ENCODE measurements at regions of chr12 and their contacts with region 1.

Region 1: DNA sequence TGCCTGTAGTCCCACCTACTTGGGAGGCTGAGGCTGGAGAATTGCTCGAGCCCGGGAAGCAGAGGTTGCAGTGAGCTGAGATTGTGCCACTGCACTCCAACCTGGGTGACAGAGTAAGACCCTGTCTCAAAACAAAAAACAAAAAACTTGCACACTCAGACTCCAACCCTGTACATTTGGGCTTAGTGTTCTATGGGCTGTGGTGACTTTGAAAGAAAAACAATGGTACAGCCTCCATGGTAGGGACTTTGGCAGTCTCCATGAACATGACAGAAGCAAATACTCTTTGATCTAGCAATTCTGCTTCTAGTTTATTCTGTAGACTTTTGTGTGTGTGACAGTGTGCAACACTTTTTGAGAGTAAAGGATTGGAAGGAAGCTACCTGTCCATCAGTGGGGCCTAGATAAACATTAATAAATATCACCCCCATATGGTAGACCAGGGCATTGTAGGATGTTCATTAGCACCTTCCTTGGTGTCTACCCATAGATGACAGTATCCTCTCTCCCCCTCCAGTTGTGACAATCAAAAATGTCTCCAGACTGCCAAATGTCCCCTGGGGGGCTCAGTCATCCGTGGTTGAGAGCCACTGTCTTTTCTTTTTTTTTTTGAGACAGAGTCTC is 10.7 kb downstream of the SNRNP35 start:
- DNase-seq: no peak
- ATAC-seq: no peak
- H3K4me3 ChIP-seq: no peak overlapping the region
- H3K27ac ChIP-seq: no peak overlapping the region
- H3K4me1 ChIP-seq: peaks cover 0 to 60% (median 32%) of the 10 kb centered on the region in 9 donors
- H3K27me3 ChIP-seq: no peaks in the 10 kb centered on the region
- CTCF ChIP-seq: peak in 4 of 9 donors; percentile 16 to 28 (median 24)

Region 2: GRCh38 chr12:123050331-123050831 is 418.3 kb before region 1 on chr12:
- intact Hi-C with region 1: no loop called
- DNase-seq: peak in 1 of 2 donors; percentile 54
- ATAC-seq: peak; percentile 74 to 94 (median 90)
- H3K4me3 ChIP-seq: no peak overlapping the region
- H3K27ac ChIP-seq: peak overlapping the region; percentile 12 to 85 (median 64)
- H3K4me1 ChIP-seq: peaks cover 16 to 74% (median 40%) of the 10 kb centered on the region in 9 donors
- H3K27me3 ChIP-seq: no peaks in the 10 kb centered on the region
- CTCF ChIP-seq: no peak

Region 3: DNA sequence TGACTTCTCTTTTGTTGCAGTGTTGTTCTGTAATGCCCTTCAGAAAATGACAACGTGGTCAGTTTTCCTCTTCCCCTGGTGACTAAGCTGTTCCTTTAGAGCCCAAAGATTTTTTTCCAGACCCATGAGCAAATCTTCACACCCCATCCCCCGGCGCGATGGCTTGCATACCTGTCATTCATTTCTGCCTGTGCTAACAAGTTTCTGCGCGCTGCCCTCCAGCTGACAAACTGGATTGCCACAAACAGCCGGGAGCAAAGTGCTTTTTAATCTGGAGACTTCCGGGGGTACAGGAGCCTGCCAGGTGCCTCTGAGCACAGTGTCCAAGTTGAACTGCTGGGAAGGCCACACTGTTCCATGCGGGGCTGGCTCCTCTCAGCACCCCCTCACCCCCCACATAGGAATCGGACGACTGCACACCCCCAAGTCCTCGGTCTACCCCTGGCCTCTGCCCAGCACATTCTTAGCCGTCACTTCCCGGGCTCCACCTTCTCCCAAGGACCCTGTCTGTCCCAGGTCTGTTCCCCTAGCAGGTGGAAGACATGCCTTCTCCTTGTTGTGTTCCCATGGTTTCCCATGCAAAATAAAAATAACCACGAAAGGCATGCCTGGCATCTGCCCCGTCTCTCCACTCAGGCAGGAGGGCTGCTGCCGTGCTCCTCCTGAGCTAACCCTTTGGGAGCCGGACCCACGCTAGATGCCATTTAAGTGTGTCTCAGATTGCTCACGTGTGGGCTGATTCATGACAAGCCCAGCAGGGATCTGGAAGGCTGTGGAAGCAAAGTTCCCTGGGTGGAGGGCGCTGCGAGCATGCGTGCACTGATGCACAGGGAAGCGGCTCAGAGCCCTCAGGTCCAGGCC is 50.7 kb after region 1 on chr12:
- intact Hi-C with region 1: loop called in 1 of 10 experiments (anchors 5 kb)
- DNase-seq: peak; percentile 60 to 69
- ATAC-seq: peak; percentile 71 to 93 (median 77)
- H3K4me3 ChIP-seq: no peak overlapping the region
- H3K27ac ChIP-seq: peak overlapping the region; percentile 69 to 91 (median 82)
- H3K4me1 ChIP-seq: peaks cover 4 to 56% (median 23%) of the 10 kb centered on the region in 9 donors
- H3K27me3 ChIP-seq: no peaks in the 10 kb centered on the region
- CTCF ChIP-seq: no peak

Region 4: DNA sequence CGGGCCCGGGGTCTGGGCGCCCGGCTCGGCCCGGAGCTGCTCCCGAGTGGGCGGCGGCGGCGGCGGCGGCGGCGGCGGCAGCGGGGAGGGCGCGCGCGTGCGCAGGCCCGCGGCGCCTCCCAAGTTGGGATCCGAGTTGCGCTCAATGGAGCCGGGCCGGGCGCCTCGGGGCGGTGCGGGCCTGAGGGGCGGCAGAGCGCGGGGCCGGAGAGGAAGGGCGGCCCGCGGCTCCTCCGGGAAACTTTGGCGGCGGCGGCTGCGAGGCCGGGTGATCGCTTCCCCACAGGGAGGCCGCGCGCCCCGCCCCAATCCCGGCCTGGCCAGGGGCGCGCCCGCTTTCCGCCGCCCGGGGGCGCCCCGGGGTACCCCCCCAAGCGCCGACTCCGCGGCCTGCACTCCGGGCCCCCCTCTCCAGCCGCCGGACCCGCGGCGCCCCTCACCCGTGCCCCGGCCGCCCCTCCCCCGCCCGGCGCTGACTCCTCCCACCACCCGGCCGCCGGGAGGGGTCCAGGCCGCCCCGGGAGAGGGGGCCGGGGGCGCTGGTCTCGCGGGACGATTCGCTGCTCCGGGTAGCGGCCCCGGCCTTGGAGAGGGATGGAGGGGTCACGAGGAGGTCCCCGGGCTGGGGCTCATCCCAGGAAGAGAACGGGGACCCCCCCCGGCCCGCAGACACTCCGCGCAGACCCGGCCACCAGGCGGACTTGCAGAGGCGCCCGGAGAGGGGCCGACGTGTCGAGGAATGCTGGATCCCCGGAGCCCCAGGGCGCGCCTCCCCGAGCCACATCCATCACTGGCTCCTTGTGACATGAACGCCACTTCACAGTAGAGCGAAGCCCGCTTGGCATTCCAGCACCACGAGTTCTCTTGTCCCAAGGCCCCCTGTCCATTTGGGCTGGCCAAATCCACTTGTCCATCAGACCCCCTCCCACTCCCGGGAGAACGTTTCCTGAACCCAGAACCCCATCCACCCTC is 65.3 kb after region 1 on chr12 and contains the start of gene RILPL1:
- intact Hi-C with region 1: loop called in 2 of 10 experiments (anchors 5 kb)
- DNase-seq: peak; percentile 40 to 62
- ATAC-seq: peak; percentile 46 to 88 (median 66)
- H3K4me3 ChIP-seq: peak within 1 kb of the TSS; percentile 56 to 96 (median 78)
- H3K27ac ChIP-seq: peak within 1 kb of the TSS; percentile 85 to 97 (median 93)
- H3K4me1 ChIP-seq: peaks cover 15 to 49% (median 32%) of the 10 kb centered on the region in 9 donors
- H3K27me3 ChIP-seq: peaks cover 0 to 22% (median 0%) of the 10 kb centered on the region in 7 donors
- CTCF ChIP-seq: peak in 7 of 9 donors; percentile 15 to 57 (median 48)
- total RNA-seq, gene RILPL1: 71.4 to 132 (median 86.6) TPM